ENCODE measurements at regions of chr17 and their contacts with region 1.

Region 1: DNA sequence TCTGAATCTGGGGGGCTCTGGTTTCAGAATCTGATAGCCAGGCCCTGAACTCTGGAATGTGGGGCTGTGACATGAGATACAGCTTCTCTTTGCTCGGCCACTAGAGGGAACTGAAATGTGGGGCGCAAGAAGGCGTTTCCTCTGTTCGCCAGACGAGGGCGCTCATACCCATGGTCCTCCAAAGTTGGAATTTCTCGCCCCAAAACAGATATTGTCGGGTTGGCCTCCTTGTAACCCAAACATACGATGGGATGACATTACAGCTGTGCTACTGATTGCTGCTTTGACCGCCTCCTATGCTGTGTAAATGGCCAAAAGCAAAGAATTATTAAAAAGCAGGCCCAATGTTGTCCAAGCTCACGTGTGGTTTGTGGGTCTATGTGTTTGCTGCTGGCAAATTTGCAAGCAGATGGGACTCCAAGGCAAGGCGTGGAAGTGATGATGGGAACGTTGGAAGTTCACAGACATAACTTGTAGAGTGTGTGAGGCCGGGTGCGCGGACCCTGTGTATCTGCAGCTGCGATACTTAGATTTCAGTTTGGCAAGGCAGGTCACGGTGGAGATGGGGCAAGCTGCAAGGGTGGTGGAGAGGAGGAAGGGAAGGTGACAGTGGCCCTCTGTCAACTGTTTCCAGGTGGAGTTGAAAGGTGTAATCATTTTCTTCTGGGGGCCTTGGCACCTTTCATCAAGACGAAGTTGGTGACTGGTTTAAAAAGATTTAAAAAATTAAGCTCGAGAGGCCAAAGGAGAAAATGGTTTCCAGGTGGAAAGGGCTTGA is 13.0 kb upstream of the MSI2 start:
- DNase-seq: peak; percentile 65 to 79
- H3K4me3 ChIP-seq: no peak overlapping the region
- H3K4me3 Mint-ChIP-seq: no peak overlapping the region
- H3K27ac Mint-ChIP-seq: no peak overlapping the region
- H3K4me1 ChIP-seq: no peaks in the 10 kb centered on the region
- H3K4me1 Mint-ChIP-seq: peaks cover 11% of the 10 kb centered on the region
- H3K27me3 ChIP-seq: no peaks in the 10 kb centered on the region
- H3K27me3 Mint-ChIP-seq: no peaks in the 10 kb centered on the region
- CTCF ChIP-seq: peak; percentile 99 to 100

Region 2: GRCh38 chr17:57130761-57131461 is 112.4 kb before region 1 on chr17:
- CTCF ChIA-PET with region 1: no interaction called
- POLR2A ChIA-PET with region 1: no interaction called
- intact Hi-C with region 1: loop called (anchors 5 kb)
- DNase-seq: peak; percentile 85 to 87
- H3K4me3 ChIP-seq: peak overlapping the region; percentile 27; the same call in 1 of the 2 replicates
- H3K4me3 Mint-ChIP-seq: peak overlapping the region; percentile 57
- H3K27ac Mint-ChIP-seq: no peak overlapping the region
- H3K4me1 ChIP-seq: peaks cover 6% of the 10 kb centered on the region; the same call in 1 of the 2 replicates
- H3K4me1 Mint-ChIP-seq: peaks cover 10% of the 10 kb centered on the region
- H3K27me3 ChIP-seq: no peaks in the 10 kb centered on the region
- H3K27me3 Mint-ChIP-seq: no peaks in the 10 kb centered on the region
- CTCF ChIP-seq: peak; percentile 92 to 97

Region 3: DNA sequence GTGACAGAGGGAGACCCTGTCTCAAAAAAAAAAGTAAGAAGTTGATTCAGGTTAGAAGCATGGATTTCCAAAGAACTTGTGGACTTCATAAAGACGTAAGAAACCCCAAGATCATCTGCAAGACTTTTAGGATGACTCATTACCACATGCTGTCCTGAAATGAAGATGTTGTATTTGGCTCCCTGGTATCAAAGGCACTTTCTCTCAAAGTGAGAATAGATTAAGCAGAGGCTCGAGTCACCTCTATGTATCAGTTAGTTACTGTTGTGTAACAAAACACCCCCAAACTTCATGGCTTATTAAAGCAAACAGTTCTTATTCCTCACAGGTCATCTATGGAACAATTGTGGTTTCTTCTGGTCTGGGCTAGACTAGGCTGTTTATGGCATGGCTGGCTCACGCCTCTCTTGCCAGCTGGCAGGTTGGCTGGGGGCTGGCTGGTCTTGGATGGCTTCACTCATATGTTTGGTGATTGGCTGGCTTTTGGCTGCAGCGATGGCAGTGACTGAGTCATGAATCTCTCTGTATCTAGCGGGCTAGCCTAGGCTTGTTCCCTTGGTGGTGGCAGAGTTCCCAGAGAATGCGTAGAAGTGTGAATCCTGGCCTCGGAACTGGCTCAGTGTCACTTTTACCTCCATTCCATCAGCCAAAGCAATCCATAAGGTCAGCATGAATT is 47.4 kb before region 1 on chr17:
- CTCF ChIA-PET with region 1: no interaction called
- POLR2A ChIA-PET with region 1: no interaction called
- intact Hi-C with region 1: no loop called
- DNase-seq: no peak
- H3K4me3 ChIP-seq: no peak overlapping the region
- H3K4me3 Mint-ChIP-seq: no peak overlapping the region
- H3K27ac Mint-ChIP-seq: no peak overlapping the region
- H3K4me1 ChIP-seq: no peaks in the 10 kb centered on the region
- H3K4me1 Mint-ChIP-seq: no peaks in the 10 kb centered on the region
- H3K27me3 ChIP-seq: no peaks in the 10 kb centered on the region
- H3K27me3 Mint-ChIP-seq: peaks cover 5% of the 10 kb centered on the region
- CTCF ChIP-seq: no peak

Region 4: GRCh38 chr17:57329380-57330214 is 86.2 kb after region 1 on chr17:
- CTCF ChIA-PET with region 1: interaction called, 4 read pairs
- POLR2A ChIA-PET with region 1: no interaction called
- intact Hi-C with region 1: loop called (anchors 5 kb)
- DNase-seq: no peak
- H3K4me3 ChIP-seq: no peak overlapping the region
- H3K4me3 Mint-ChIP-seq: no peak overlapping the region
- H3K27ac Mint-ChIP-seq: peak overlapping the region; percentile 48
- H3K4me1 ChIP-seq: peaks cover 18% of the 10 kb centered on the region; the same call in 1 of the 2 replicates
- H3K4me1 Mint-ChIP-seq: peaks cover 18% of the 10 kb centered on the region
- H3K27me3 ChIP-seq: no peaks in the 10 kb centered on the region
- H3K27me3 Mint-ChIP-seq: no peaks in the 10 kb centered on the region
- CTCF ChIP-seq: no peak

Region 5: DNA sequence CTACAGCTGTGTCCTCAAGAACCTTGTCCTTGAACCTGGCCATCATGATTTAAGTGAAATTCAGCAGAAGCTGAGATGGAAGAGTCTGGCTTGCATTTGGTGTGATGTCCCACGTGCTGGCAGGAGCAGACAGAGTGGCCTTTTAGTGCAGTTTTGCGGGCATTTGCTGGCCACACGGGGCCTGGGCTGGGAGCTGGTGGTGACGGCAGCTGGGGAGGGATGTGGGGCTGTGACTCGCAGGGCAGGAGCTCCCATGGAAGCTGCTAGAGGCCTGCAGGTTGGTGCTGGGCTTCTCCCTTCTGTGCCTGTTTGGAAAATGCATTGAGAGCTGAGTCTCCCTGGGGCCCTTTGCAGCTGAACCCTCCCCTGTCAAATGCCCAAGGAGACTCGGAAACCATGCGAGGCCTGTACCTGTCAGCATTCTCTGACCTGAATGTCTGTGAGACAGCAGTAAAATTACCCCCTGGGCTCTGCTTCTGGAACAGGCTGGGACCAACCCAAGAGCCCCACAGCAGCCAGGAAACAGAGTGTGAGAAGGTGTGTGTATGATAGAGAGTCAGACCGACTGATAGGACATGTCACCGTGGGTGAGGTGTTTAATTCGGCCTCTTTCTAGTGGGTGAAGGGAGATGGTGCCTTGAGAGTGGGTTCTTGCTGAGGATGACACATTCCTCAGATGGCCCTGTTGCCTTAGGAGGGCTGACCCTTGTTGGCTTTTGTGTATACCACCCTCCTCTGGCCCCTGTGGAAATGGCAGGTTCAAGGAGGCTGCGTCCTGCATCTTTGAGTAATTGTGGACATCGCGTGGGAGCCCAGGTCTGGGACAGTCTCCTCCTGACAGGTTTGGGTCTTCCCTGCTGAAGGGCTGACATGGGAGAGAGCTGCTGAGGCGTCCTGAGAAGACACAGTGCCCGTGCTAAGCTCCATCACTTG is 158.5 kb after region 1 on chr17:
- CTCF ChIA-PET with region 1: interaction called, 13 read pairs
- POLR2A ChIA-PET with region 1: no interaction called
- intact Hi-C with region 1: loop called (anchors 1 kb)
- DNase-seq: peak in 1 of 2 experiments; percentile 49
- H3K4me3 ChIP-seq: no peak overlapping the region
- H3K4me3 Mint-ChIP-seq: no peak overlapping the region
- H3K27ac Mint-ChIP-seq: peak overlapping the region; percentile 29
- H3K4me1 ChIP-seq: peaks cover 8% of the 10 kb centered on the region
- H3K4me1 Mint-ChIP-seq: peaks cover 37% of the 10 kb centered on the region
- H3K27me3 ChIP-seq: no peaks in the 10 kb centered on the region; the same call in 1 of the 2 replicates
- H3K27me3 Mint-ChIP-seq: no peaks in the 10 kb centered on the region
- CTCF ChIP-seq: peak in 1 of 2 experiments; percentile 27

Region 6: GRCh38 chr17:57440522-57441485 is 197.4 kb after region 1 on chr17:
- CTCF ChIA-PET with region 1: interaction called, 18 read pairs
- POLR2A ChIA-PET with region 1: no interaction called
- intact Hi-C with region 1: loop called (anchors 1 kb)
- DNase-seq: no peak
- H3K4me3 ChIP-seq: no peak overlapping the region
- H3K4me3 Mint-ChIP-seq: no peak overlapping the region
- H3K27ac Mint-ChIP-seq: peak overlapping the region; percentile 78
- H3K4me1 ChIP-seq: peaks cover 61% of the 10 kb centered on the region
- H3K4me1 Mint-ChIP-seq: peaks cover 65% of the 10 kb centered on the region
- H3K27me3 ChIP-seq: no peaks in the 10 kb centered on the region
- H3K27me3 Mint-ChIP-seq: no peaks in the 10 kb centered on the region
- CTCF ChIP-seq: no peak

Region 7: GRCh38 chr17:57671667-57672632 is 428.6 kb after region 1 on chr17:
- CTCF ChIA-PET with region 1: interaction called, 25 read pairs
- POLR2A ChIA-PET with region 1: no interaction called
- intact Hi-C with region 1: loop called (anchors 1 kb)
- DNase-seq: peak; percentile 75 to 82
- H3K4me3 ChIP-seq: no peak overlapping the region
- H3K4me3 Mint-ChIP-seq: no peak overlapping the region
- H3K27ac Mint-ChIP-seq: no peak overlapping the region
- H3K4me1 ChIP-seq: no peaks in the 10 kb centered on the region
- H3K4me1 Mint-ChIP-seq: no peaks in the 10 kb centered on the region
- H3K27me3 ChIP-seq: no peaks in the 10 kb centered on the region
- H3K27me3 Mint-ChIP-seq: no peaks in the 10 kb centered on the region
- CTCF ChIP-seq: peak; percentile 91 to 96

Region 8: GRCh38 chr17:57747221-57748017 is 504.1 kb after region 1 on chr17:
- CTCF ChIA-PET with region 1: interaction called, 11 read pairs
- POLR2A ChIA-PET with region 1: no interaction called
- intact Hi-C with region 1: no loop called
- DNase-seq: peak in 1 of 2 experiments; percentile 51
- H3K4me3 ChIP-seq: no peak overlapping the region
- H3K4me3 Mint-ChIP-seq: no peak overlapping the region
- H3K27ac Mint-ChIP-seq: no peak overlapping the region
- H3K4me1 ChIP-seq: no peaks in the 10 kb centered on the region
- H3K4me1 Mint-ChIP-seq: no peaks in the 10 kb centered on the region
- H3K27me3 ChIP-seq: no peaks in the 10 kb centered on the region; the same call in 1 of the 2 replicates
- H3K27me3 Mint-ChIP-seq: peaks cover 16% of the 10 kb centered on the region
- CTCF ChIP-seq: peak; percentile 72 to 83